ENCODE measurements at regions of chr1 and their contacts with region 1.

Region 1: DNA sequence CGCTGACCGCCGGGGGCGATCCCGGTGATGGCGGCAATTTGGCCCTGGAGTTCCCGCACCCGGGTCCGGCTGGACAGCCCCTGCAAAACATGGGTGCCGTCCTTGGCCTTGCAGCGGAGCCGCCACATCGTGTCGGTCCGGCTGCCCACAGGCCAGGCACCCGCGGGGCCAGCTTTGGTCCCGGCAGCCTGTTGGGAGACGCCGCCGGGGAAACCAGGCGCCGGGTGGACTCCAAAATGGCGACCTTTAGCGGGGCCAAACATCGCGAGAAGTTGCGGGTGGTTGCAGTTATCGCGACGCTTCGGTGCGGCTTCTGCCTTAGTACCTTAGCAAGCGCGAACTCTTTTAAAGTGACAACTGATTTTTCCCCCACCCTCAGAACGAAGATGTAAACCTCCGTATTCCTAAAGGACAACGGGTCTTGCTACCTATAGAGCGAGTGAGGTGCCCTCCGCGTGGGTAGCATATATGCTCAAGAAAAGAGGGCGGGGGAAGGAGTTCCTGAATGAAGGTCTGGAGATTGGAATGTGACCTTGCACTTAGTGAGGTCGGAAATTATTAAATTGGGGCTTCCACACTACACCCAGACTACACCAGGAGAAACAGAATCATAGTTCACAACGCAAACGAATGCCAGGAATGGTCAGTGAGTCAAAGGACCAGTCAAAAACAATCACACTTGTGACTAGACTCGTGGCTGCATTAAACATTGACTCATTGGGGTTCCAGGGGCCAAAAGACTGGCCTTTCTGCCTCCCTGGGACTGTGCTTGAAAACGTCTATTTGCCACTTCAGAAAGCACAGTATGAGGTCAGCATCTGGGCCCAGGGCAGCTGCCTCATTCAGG is at the start of gene YOD1:
- H3K4me3 ChIP-seq: peak within 1 kb of the TSS; percentile 94
- H3K27ac ChIP-seq: peak within 1 kb of the TSS; percentile 73
- H3K4me1 ChIP-seq: no peaks in the 10 kb centered on the region; the same call in 1 of the 2 replicates
- CTCF ChIP-seq: no peak

Region 2: GRCh38 chr1:207077470-207078377 is 26.7 kb after region 1 on chr1:
- CTCF ChIA-PET with region 1: interaction called, 25 read pairs
- POLR2A ChIA-PET with region 1: interaction called, 3 read pairs
- H3K4me3 ChIP-seq: no peak overlapping the region
- H3K27ac ChIP-seq: no peak overlapping the region
- H3K4me1 ChIP-seq: no peaks in the 10 kb centered on the region
- CTCF ChIP-seq: peak; percentile 68; the same call in 1 of the 2 replicates

Region 3: DNA sequence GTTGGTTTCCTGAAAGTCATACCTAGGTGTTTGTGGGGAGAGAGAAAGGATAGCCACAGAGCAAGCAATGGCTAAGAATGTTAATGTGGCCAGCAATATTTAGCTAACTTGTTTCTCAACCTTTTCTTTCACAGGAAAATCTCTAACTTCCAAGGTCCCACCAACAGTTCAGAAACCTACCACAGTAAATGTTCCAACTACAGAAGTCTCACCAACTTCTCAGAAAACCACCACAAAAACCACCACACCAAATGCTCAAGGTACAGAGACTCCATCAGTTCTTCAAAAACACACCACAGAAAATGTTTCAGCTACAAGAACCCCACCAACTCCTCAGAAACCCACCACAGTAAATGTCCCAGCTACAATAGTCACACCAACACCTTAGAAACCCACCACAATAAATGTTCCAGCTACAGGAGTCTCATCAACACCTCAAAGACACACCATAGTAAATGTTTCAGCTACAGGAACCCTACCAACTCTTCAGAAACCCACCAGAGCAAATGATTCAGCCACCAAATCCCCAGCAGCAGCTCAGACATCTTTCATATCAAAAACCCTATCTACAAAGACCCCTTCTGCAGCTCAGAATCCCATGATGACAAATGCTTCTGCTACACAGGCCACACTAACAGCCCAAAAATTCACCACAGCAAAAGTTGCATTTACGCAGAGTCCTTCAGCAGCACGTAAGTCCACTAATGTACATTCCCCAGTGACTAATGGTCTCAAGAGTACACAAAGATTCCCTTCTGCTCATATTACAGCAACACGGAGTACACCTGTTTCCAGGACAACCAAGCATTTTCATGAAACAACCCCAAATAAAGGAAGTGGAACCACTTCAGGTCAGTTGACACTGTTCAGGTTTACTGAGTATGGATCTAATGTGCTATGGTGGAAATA is 285.8 kb after region 1 on chr1:
- CTCF ChIA-PET with region 1: no interaction called
- POLR2A ChIA-PET with region 1: no interaction called
- H3K4me3 ChIP-seq: no peak overlapping the region
- H3K27ac ChIP-seq: no peak overlapping the region
- H3K4me1 ChIP-seq: no peaks in the 10 kb centered on the region
- CTCF ChIP-seq: no peak

Measured in HEK293 (cell line).